IMR-90 (cell line): ENCODE measurements at regions of chr16 and their contacts with region 1.

Region 1: GRCh38 chr16:21646721-21647561 is 5.5 kb downstream of the IGSF6 start:
- DNase-seq: no peak
- ATAC-seq: no peak
- H3K4me3 ChIP-seq: no peak overlapping the region
- H3K27ac ChIP-seq: no peak overlapping the region
- H3K4me1 ChIP-seq: 0 out of 2 replicates have a peak, but pooled peaks cover 2% of the 10 kb centered on the region
- H3K27me3 ChIP-seq: no peaks in the 10 kb centered on the region
- CTCF ChIP-seq: no peak
- POLR2A ChIP-seq: no peak
- RAD21 ChIP-seq: no peak

Region 2: GRCh38 chr16:21656795-21657768 is 10.1 kb after region 1 on chr16:
- CTCF ChIA-PET with region 1: interaction called, 19 read pairs
- POLR2A ChIA-PET with region 1: no interaction called
- dilution Hi-C with region 1: no loop called
- in situ Hi-C with region 1: no loop called
- intact Hi-C with region 1: no loop called
- DNase-seq: peak; percentile 67
- ATAC-seq: peak; percentile 68
- H3K4me3 ChIP-seq: no peak overlapping the region
- H3K27ac ChIP-seq: no peak overlapping the region
- H3K4me1 ChIP-seq: no peaks in the 10 kb centered on the region; the same call in 1 of the 2 replicates
- H3K27me3 ChIP-seq: no peaks in the 10 kb centered on the region
- CTCF ChIP-seq: peak; percentile 82
- POLR2A ChIP-seq: no peak
- RAD21 ChIP-seq: peak; percentile 71

Region 3: GRCh38 chr16:21666772-21667171 is 19.8 kb after region 1 on chr16:
- CTCF ChIA-PET with region 1: no interaction called
- POLR2A ChIA-PET with region 1: interaction called, 12 read pairs
- dilution Hi-C with region 1: no loop called
- in situ Hi-C with region 1: no loop called
- intact Hi-C with region 1: no loop called
- DNase-seq: no peak
- ATAC-seq: no peak
- H3K4me3 ChIP-seq: no peak overlapping the region
- H3K27ac ChIP-seq: no peak overlapping the region
- H3K4me1 ChIP-seq: no peaks in the 10 kb centered on the region
- H3K27me3 ChIP-seq: peaks cover 22% of the 10 kb centered on the region
- CTCF ChIP-seq: no peak
- POLR2A ChIP-seq: no peak
- RAD21 ChIP-seq: no peak